ENCODE measurements at regions of chr6 and their contacts with region 1.

Region 1: GRCh38 chr6:20900389-20901160 is 366.3 kb downstream of the CDKAL1 start:
- DNase-seq: no peak
- ATAC-seq: peak; percentile 97
- H3K4me3 ChIP-seq: no peak overlapping the region
- H3K27ac ChIP-seq: peak overlapping the region; percentile 33; the same call in 1 of the 2 replicates
- H3K4me1 ChIP-seq: peaks cover 6% of the 10 kb centered on the region; the same call in 1 of the 2 replicates
- H3K27me3 ChIP-seq: no peaks in the 10 kb centered on the region
- CTCF ChIP-seq: no peak
- EP300 ChIP-seq: peak; percentile 42 to 71; a peak in 3 of 4 replicates
- POLR2A ChIP-seq: no peak
- RAD21 ChIP-seq: no peak

Region 2: DNA sequence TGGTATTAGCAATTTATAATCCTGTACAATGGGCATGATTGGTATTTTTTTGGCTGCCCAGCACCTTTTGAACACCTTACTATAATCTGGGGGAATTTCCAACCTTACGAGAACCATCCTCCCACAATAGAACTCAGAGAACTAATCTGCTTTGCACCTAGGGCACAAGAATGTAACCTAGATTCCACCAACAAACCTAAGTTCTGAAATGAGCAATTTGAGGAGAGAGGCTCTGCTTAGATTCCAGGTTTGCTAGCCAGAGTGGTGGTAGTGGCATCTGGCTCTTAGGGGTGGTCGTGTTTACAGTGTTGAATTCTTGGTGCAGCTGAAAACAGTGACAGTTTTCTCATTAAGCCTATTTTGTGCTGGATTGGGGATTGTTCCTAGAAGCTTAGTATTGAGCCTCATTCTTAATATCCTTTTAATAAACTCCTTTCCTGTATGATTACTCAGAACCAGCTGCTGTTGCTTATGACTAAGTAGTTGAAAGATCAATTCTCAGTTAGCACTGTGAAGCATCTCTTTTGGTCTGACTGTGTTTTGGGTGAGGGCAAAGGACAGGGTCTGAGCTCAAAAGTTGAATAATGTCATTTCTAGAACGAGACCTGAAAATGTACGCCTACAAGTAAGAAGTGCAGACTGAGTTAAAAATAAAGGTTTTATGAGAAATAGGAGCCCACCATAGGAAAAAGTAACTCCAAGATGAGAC is 19.3 kb after region 1 on chr6:
- CTCF ChIA-PET with region 1: interaction called, 3 read pairs
- POLR2A ChIA-PET with region 1: interaction called, 6 read pairs
- RAD21 ChIA-PET with region 1: interaction called, 5 read pairs
- SMC1A ChIA-PET with region 1: interaction called, 3 read pairs
- in situ Hi-C with region 1: no loop called
- intact Hi-C with region 1: loop called (anchors 2 kb)
- DNase-seq: peak; percentile 59
- ATAC-seq: peak; percentile 81
- H3K4me3 ChIP-seq: no peak overlapping the region
- H3K27ac ChIP-seq: peak overlapping the region; percentile 77
- H3K4me1 ChIP-seq: peaks cover 17% of the 10 kb centered on the region
- H3K27me3 ChIP-seq: no peaks in the 10 kb centered on the region
- CTCF ChIP-seq: no peak
- EP300 ChIP-seq: peak; percentile 37 to 46; a peak in 2 of 4 replicates
- POLR2A ChIP-seq: no peak
- RAD21 ChIP-seq: no peak